ENCODE measurements at regions of chr6 and their contacts with region 1.

Region 1: DNA sequence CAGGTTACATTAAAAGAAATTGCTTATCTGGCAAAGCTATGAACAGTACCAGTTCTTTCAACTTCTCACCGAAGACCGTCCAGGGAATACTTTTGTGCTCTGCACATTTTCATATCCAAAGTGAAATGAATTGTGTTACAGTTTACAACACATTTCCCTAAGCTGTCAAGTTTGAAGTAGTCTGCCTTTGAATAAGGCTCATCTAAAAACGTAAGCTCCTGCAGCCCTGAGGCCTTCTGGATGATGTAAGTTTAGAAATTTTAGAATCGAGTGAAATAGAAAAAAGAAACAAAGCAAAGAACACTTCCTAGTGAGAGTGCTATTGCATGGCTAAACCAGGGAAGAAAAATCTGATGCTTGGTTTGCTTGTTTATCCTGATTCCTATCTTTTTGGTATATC is 653.8 kb downstream of the MMUT start:
- DNase-seq: no peak
- H3K4me3 ChIP-seq: no peak overlapping the region
- H3K27ac ChIP-seq: no peak overlapping the region
- H3K4me1 ChIP-seq: no peaks in the 10 kb centered on the region
- H3K27me3 ChIP-seq: no peaks in the 10 kb centered on the region
- CTCF ChIP-seq: no peak

Region 2: DNA sequence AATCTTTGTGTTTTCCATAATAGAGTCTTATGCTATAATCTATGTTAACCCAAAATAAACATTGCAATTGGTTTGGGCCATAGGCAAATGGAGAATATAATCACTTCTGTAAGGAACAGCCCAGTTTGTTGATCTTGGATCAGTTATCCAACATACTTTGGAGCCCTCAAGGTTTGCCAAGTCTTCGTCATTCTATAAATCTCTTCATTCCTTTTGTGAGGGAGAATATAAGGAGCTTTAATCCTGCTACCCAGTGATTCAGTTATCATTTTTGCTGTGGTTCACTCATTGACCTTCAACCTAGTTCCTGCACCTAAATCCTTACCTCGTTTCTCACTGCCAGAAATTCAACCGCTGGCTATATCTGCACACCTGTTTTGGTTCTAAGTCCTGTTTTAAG is 197.9 kb before region 1 on chr6:
- intact Hi-C with region 1: no loop called
- DNase-seq: no peak
- H3K4me3 ChIP-seq: no peak overlapping the region
- H3K27ac ChIP-seq: no peak overlapping the region
- H3K4me1 ChIP-seq: no peaks in the 10 kb centered on the region
- H3K27me3 ChIP-seq: no peaks in the 10 kb centered on the region
- CTCF ChIP-seq: no peak

Region 3: DNA sequence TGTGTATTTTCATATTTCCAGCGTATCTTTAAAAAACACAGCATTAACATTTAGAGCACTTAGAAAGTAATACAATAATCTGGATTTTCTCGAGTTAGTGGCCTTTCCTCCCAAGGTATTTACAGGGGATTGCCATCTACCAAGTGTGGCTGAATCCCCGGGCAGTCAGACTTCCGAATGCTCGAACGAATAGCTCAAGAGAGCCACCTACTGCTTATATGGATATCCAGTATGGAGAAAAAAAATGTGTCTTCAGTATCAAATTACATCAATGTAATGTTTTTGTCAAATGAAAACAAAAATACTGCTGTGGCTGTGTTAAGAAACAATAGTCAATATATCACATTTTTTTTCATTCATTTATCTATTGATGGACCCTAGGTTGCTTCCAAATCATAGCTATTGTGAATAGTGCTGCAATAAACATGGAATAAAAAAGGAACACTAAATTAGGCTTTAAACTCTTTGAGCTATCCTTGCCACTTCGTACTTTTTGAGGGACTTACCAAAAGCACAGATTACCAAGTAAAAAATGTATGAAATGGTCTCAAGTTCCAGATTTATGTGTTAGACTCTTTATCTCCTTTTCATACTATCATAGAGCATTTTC is 43.8 kb before region 1 on chr6:
- intact Hi-C with region 1: loop called (anchors 2 kb)
- DNase-seq: no peak
- H3K4me3 ChIP-seq: no peak overlapping the region
- H3K27ac ChIP-seq: no peak overlapping the region
- H3K4me1 ChIP-seq: no peaks in the 10 kb centered on the region
- H3K27me3 ChIP-seq: no peaks in the 10 kb centered on the region
- CTCF ChIP-seq: peak in 1 of 2 experiments; percentile 21

Region 4: GRCh38 chr6:48957781-48958180 is 148.5 kb after region 1 on chr6:
- intact Hi-C with region 1: no loop called
- DNase-seq: no peak
- H3K4me3 ChIP-seq: no peak overlapping the region
- H3K27ac ChIP-seq: no peak overlapping the region
- H3K4me1 ChIP-seq: no peaks in the 10 kb centered on the region
- H3K27me3 ChIP-seq: no peaks in the 10 kb centered on the region
- CTCF ChIP-seq: no peak

Measured in tibial artery (tissue), 4 donors.